ENCODE measurements at regions of chr9 and their contacts with region 1.

Region 1: GRCh38 chr9:2087500-2088313 is 72.6 kb downstream of the SMARCA2 start:
- DNase-seq: peak; percentile 39
- ATAC-seq: peak; percentile 95
- H3K4me3 Mint-ChIP-seq: no peak overlapping the region
- H3K27ac Mint-ChIP-seq: peak overlapping the region; percentile 24
- H3K4me1 Mint-ChIP-seq: peaks cover 18% of the 10 kb centered on the region
- H3K27me3 Mint-ChIP-seq: no peaks in the 10 kb centered on the region

Region 2: GRCh38 chr9:1726993-1727759 is 360.5 kb before region 1 on chr9:
- CTCF ChIA-PET with region 1: interaction called, 3 read pairs
- POLR2A ChIA-PET with region 1: no interaction called
- intact Hi-C with region 1: loop called (anchors 5 to 10 kb)
- DNase-seq: peak; percentile 13
- ATAC-seq: peak; percentile 19
- H3K4me3 Mint-ChIP-seq: no peak overlapping the region
- H3K27ac Mint-ChIP-seq: no peak overlapping the region
- H3K4me1 Mint-ChIP-seq: no peaks in the 10 kb centered on the region
- H3K27me3 Mint-ChIP-seq: peaks cover 11% of the 10 kb centered on the region

Region 3: DNA sequence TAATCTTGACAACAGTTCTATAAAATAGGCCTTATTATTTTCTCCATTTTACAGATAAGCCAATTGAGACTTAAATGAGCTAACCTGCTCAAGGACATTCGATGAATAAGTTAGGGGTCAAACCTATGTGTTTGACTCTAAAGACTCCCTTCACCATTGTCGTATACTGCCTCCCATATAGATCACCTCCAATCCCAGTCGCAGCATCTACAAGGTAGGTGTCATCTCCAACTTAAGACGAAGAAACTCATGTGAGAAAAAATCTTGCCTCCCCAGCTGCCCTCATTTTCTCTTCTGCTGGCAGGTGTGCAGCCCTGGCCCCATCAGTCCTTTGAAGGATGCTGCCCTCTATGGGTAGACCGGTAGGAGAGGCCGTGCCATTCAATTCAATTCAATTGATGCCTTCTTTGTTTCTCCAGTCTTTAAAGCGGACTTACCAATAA is 147.8 kb before region 1 on chr9:
- CTCF ChIA-PET with region 1: interaction called, 3 read pairs
- POLR2A ChIA-PET with region 1: no interaction called
- intact Hi-C with region 1: loop called in 1 of 2 experiments (anchors 1 kb)
- DNase-seq: peak; percentile 62
- ATAC-seq: peak; percentile 83
- H3K4me3 Mint-ChIP-seq: no peak overlapping the region
- H3K27ac Mint-ChIP-seq: no peak overlapping the region
- H3K4me1 Mint-ChIP-seq: no peaks in the 10 kb centered on the region
- H3K27me3 Mint-ChIP-seq: peaks cover 7% of the 10 kb centered on the region

Region 4: GRCh38 chr9:2053883-2054845 is 33.5 kb before region 1 on chr9:
- CTCF ChIA-PET with region 1: interaction called, 20 read pairs
- POLR2A ChIA-PET with region 1: no interaction called
- intact Hi-C with region 1: loop called in 1 of 2 experiments (anchors 1 kb)
- DNase-seq: peak; percentile 85
- ATAC-seq: peak; percentile 91
- H3K4me3 Mint-ChIP-seq: peak overlapping the region; percentile 58
- H3K27ac Mint-ChIP-seq: peak overlapping the region; percentile 84
- H3K4me1 Mint-ChIP-seq: peaks cover 52% of the 10 kb centered on the region
- H3K27me3 Mint-ChIP-seq: no peaks in the 10 kb centered on the region

Region 5: GRCh38 chr9:2107906-2108451 is 20.3 kb after region 1 on chr9:
- CTCF ChIA-PET with region 1: interaction called, 7 read pairs
- POLR2A ChIA-PET with region 1: no interaction called
- intact Hi-C with region 1: loop called in 1 of 2 experiments (anchors 1 kb)
- DNase-seq: no peak
- ATAC-seq: no peak
- H3K4me3 Mint-ChIP-seq: no peak overlapping the region
- H3K27ac Mint-ChIP-seq: no peak overlapping the region
- H3K4me1 Mint-ChIP-seq: peaks cover 14% of the 10 kb centered on the region
- H3K27me3 Mint-ChIP-seq: no peaks in the 10 kb centered on the region

Measured in activated CD4-positive, alpha-beta T cell treated with anti-CD3 and anti-CD28 coated beads for 36 hours (primary cell).